ENCODE measurements at regions of chr15 and their contacts with region 1.

Region 1: DNA sequence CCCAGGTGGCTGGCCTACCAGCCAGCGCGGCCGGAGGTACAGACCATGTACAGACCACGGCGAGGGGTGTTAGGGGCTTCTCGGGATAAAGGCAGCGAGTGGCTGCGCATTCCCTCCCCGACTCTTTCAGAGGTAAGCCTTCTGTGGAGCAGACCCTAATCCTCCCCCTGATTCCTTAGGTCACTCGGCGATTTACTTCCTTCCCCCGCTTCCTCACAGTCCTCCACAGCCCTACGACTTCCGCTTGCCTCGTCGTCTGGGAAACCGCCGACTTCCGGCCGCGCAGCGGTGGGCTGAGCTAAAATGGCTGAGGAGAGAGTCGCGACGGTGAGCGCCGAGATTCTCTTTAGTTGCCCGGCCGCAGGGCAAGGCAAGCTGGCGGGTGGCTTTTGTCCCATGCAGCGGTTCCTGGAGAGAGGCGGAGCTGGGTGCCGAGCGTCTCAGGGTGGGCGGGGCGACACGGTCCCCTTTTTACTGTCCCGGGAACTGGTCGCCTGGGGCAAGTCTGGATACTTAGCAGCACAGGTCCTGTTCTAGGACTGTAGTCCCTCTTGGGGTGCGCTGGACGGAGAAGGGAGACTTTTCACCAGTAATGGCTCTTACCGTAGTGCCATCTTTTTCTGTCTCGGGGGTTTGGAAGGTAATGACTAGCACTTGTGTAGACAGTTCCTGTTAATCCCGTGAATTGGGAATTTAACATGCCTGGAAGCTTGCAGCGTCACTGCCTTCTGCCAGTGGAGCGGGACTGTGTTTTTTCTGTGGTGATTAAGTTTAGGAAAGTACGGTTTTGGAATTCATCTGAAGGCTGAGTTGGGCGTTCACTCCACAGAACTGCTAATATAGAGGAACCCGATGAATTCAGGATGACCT is at the starts of genes BBS4 and HIGD2B:
- DNase-seq: peak; percentile 65 to 81
- ATAC-seq: peak; percentile 96 to 97
- H3K4me3 ChIP-seq: peak within 1 kb of the TSS; percentile 67 to 83 (median 80)
- H3K27ac ChIP-seq: peak within 1 kb of the TSS; percentile 85 to 88 (median 86)
- H3K4me1 ChIP-seq: peaks cover 12 to 15% of the 10 kb centered on the region in 2 donors
- H3K27me3 ChIP-seq: no peaks in the 10 kb centered on the region
- CTCF ChIP-seq: no peak
- POLR2A ChIP-seq: peak; percentile 68 to 69
- total RNA-seq, gene BBS4: 21.6 to 37.0 (median 28.7) TPM
- total RNA-seq, gene HIGD2B: not detected

Region 2: GRCh38 chr15:72312605-72313447 is 373.3 kb before region 1 on chr15:
- in situ Hi-C with region 1: no loop called
- intact Hi-C with region 1: no loop called
- DNase-seq: peak in 1 of 2 donors; percentile 64
- ATAC-seq: peak; percentile 16 to 71
- H3K4me3 ChIP-seq: no peak overlapping the region
- H3K27ac ChIP-seq: no peak overlapping the region
- H3K4me1 ChIP-seq: no peaks in the 10 kb centered on the region
- H3K27me3 ChIP-seq: no peaks in the 10 kb centered on the region
- CTCF ChIP-seq: peak; percentile 41 to 69 (median 48)
- POLR2A ChIP-seq: no peak

Region 3: GRCh38 chr15:72375847-72376581 is 310.1 kb before region 1 on chr15 and contains the start of gene HEXA:
- in situ Hi-C with region 1: no loop called
- intact Hi-C with region 1: loop called (anchors 10 kb)
- DNase-seq: peak; percentile 95 to 98
- ATAC-seq: peak; percentile 95 to 96
- H3K4me3 ChIP-seq: peak within 1 kb of the TSS; percentile 79 to 95 (median 89)
- H3K27ac ChIP-seq: peak within 1 kb of the TSS; percentile 91 to 94 (median 93)
- H3K4me1 ChIP-seq: peaks cover 33 to 35% of the 10 kb centered on the region in 2 donors
- H3K27me3 ChIP-seq: no peaks in the 10 kb centered on the region
- CTCF ChIP-seq: peak in 2 of 5 experiments; percentile 35 to 62
- POLR2A ChIP-seq: peak; percentile 73 to 81
- total RNA-seq, gene HEXA: 29.4 to 51.5 (median 40.0) TPM

Region 4: DNA sequence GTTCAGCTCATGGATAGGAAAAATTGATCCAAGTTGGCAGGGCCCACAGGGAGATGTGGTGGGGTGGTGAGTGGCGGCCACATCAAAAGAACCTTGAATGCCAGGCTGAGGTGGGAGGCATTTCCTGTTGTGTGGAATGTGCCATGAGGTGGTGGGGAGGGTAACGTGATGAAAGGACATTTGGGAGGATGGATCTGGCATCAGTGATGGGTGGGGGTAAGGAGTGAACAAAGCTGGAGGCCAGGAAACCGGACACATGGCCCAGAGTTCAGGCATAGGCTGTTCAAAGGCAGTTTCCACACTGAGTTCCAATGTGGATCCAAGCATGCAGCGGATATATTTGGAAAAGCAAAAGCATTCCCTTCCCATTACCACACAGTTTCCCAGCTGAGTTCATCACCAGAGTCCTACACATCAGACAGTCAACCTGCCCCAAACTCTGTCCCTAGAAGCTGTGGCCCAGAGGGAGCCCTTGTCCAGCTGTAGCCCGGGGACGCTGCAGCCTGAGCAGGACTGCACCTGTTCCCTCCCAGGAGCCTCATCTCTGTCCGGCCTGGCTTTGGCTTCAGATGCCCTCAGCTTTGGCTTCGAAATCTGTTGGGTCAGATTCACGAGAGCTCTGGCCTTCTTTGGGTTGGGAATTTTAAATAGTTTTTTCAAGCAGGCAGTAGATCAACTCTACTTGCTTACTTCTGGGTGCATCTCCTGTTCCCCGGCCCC is 69.5 kb before region 1 on chr15:
- in situ Hi-C with region 1: loop called in 3 of 4 experiments (anchors 10 kb)
- intact Hi-C with region 1: no loop called
- DNase-seq: no peak
- ATAC-seq: no peak
- H3K4me3 ChIP-seq: no peak overlapping the region
- H3K27ac ChIP-seq: no peak overlapping the region
- H3K4me1 ChIP-seq: no peaks in the 10 kb centered on the region
- H3K27me3 ChIP-seq: no peaks in the 10 kb centered on the region
- CTCF ChIP-seq: no peak
- POLR2A ChIP-seq: no peak

Region 5: DNA sequence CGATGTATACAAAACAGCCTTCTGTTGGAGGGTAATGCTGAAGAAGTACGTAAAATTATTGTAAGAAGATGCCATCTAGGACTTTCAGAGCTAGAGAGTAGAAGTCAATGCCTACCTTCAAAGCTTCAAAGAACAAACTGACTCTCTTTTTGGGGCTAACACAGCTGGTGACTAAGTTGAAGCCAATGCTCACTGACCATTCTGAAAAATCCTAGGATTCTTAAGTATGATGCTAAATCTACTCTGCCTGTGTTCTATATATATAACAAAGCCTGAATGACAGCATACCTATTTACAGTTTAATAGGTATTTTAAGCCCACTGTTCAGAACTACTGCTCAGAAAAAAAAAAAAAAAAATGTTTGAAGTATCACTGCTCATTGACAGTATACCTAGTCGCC is 78.5 kb after region 1 on chr15:
- in situ Hi-C with region 1: no loop called
- intact Hi-C with region 1: no loop called
- DNase-seq: no peak
- ATAC-seq: no peak
- H3K4me3 ChIP-seq: no peak overlapping the region
- H3K27ac ChIP-seq: no peak overlapping the region
- H3K4me1 ChIP-seq: peaks cover 0 to 3% of the 10 kb centered on the region in 2 donors
- H3K27me3 ChIP-seq: no peaks in the 10 kb centered on the region
- CTCF ChIP-seq: no peak
- POLR2A ChIP-seq: no peak

Region 6: DNA sequence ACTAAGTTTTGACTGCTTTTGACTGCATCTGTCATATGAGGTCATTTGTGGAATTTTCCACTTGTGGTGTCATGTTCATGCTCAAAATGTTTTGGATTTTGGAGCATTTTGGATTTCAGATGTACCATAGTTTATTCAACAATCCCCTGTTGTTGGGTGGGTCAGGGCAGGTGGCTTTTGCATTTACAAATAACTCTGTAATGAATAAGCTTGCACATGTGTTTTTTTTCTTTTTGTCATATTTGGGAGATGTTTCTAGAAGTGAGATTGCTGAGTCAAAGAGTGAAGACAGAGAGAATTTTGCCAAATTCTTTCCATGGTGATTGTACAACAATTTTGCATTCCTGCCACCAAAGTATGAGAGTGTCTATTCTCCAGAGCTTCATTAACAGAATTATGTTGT is 159.8 kb after region 1 on chr15:
- in situ Hi-C with region 1: no loop called
- intact Hi-C with region 1: no loop called
- DNase-seq: no peak
- ATAC-seq: no peak
- H3K4me3 ChIP-seq: no peak overlapping the region
- H3K27ac ChIP-seq: no peak overlapping the region
- H3K4me1 ChIP-seq: peaks cover 0 to 19% of the 10 kb centered on the region in 2 donors
- H3K27me3 ChIP-seq: no peaks in the 10 kb centered on the region
- CTCF ChIP-seq: no peak
- POLR2A ChIP-seq: no peak

Measured in gastrocnemius medialis (tissue), 4 donors.